ENCODE measurements at regions of chr6 and their contacts with region 1.

Region 1: DNA sequence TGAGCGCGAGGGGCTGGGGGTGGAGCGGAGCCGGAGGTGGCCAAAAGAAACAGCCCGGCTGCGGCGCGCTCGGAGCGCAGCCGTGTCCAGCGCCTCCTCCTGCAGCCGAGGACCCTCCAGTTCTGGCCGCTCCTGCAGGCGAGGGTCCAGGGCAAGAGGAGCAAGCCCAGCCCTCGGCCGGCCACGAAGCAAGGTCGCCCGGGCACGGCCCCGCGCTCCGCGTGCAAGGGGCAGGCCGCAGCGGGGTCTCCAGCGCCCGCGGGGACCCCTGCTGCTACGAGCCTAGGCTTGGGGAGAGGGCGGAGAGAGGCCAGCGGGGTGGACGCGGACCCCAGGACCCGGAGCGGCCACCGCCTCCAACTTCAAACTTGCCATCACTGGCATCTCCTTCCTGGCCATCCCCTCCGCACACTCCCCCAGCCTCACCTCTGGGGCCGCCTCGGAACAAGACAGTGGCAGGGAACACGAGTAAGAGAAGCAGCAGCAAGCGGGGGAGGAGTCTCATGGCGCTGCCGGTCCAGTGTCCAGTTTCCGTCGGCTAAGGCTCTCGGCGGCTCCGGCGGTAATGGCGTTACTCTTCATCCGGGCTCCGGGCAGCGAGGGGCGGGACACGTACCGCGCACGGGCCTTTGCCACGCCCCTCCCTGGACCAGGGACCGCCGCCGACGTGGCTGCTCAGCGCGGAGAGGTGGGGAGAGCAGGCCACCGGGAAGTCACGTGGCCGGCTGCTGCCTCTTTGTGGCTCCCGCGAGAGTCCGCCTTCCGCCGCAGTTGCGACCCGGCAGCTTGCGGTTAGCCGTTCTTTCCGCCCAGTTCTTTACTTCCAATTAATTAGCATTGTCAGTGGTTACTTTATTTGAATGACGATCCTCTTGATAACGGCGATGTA is at the start of gene SSR1:
- DNase-seq: peak; percentile 96
- H3K4me3 Mint-ChIP-seq: peak within 1 kb of the TSS; percentile 92
- H3K27ac Mint-ChIP-seq: peak within 1 kb of the TSS; percentile 94
- H3K4me1 Mint-ChIP-seq: peaks cover 40% of the 10 kb centered on the region
- H3K27me3 Mint-ChIP-seq: no peaks in the 10 kb centered on the region
- total RNA-seq, gene SSR1: 116 to 121 TPM

Region 2: DNA sequence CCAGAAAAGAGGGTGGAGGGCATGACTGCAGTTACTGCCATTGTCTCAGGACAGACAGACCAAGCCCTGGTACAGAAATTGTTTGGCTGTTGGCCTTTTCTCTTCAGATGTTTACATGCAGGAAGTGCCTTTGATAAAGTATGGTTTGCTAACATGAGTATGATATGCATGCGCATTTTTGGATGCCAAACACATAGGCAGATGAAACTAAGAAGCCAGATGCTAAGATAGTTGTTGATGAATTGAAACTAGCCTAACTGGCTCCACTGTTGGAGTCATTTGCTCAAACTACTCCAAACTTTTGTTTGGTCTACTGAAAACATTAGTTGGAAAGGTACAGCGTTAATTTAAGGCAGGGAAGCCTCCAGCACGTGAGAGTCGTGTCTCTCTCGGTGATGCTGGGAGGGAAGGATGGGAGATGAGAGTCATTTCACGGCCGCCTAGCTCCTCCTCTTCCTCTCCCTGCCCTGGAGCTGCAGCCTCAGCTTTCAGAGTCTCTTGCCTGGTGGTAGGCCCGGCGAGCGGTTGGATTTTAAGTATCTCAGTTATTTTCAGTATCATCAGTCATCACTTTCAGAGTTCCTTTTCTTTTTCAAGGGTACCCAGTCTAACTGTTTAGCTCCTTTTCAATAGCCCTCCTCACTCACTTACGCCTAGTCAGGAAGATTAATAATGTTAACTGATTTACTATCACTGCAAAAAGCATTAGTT is 175.4 kb before region 1 on chr6:
- CTCF ChIA-PET with region 1: no interaction called
- intact Hi-C with region 1: loop called (anchors 5 kb)
- DNase-seq: peak; percentile 84
- H3K4me3 Mint-ChIP-seq: peak overlapping the region; percentile 79
- H3K27ac Mint-ChIP-seq: peak overlapping the region; percentile 98
- H3K4me1 Mint-ChIP-seq: peaks cover 80% of the 10 kb centered on the region
- H3K27me3 Mint-ChIP-seq: no peaks in the 10 kb centered on the region

Region 3: DNA sequence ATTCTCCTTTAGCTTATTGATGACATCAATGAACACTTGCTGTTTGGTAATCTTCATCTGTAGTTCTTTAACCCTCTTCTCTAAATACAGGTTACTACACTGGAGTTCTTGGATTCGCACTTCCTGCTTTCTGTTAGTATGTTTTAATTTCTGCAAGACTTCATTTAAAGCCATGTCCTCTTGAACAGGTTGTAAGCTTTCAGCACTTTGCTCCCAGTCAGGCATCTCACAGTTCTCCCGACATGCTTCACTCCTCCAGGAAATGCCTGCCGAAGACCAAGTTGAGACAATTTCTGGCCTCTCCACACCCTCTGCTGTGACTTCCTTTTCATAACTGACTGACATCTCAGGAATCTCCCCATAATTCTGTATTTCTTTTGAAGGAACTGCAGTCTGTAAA is 60.9 kb after region 1 on chr6:
- CTCF ChIA-PET with region 1: no interaction called
- intact Hi-C with region 1: no loop called
- DNase-seq: no peak
- H3K4me3 Mint-ChIP-seq: no peak overlapping the region
- H3K27ac Mint-ChIP-seq: no peak overlapping the region
- H3K4me1 Mint-ChIP-seq: peaks cover 5% of the 10 kb centered on the region
- H3K27me3 Mint-ChIP-seq: peaks cover 2% of the 10 kb centered on the region

Region 4: DNA sequence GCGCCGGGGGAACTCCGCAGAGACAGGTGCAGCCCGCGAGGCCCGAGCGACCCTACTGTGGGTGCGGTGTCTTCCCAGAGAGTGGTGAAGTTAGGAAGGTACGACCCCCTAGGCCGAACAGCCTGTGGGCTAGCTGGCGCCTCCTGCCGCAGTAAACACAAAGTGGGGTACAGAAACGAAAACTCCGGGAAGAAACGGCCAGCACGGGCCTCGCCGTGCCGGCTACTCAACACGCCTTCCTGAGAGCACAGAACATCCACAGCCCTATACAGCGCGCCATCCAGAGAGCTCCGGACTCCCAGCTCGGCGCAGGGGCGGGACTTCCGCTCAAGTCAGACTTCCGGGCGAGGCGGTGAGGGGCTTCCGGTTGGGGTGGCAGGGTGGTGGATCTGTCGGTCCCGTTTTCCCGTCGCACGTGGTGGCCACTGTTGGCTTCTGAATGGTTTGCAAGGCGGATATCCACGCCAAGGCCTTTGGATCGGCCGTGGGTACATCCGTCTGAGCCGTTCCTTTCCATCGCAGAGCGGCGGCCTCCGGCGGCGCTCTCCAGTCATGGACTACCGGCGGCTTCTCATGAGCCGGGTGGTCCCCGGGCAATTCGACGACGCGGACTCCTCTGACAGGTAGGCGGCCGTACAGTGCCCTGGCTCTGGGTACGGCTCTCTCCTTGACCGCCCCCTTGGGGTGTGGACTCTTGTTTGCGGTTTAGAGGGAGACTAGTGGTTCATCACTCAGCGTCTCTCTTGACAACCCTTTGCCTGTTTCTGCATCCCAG is 76.8 kb after region 1 on chr6 and contains the starts of genes CAGE1 and RIOK1:
- CTCF ChIA-PET with region 1: interaction called, 4 read pairs
- intact Hi-C with region 1: loop called (anchors 1 kb)
- DNase-seq: peak; percentile 97
- H3K4me3 Mint-ChIP-seq: peak within 1 kb of the TSS; percentile 94
- H3K27ac Mint-ChIP-seq: peak within 1 kb of the TSS; percentile 97
- H3K4me1 Mint-ChIP-seq: peaks cover 40% of the 10 kb centered on the region
- H3K27me3 Mint-ChIP-seq: no peaks in the 10 kb centered on the region
- total RNA-seq, gene CAGE1: 0.25 to 0.26 TPM
- total RNA-seq, gene RIOK1: 33.8 to 38.5 TPM

Region 5: GRCh38 chr6:7910654-7911344 is 597.9 kb after region 1 on chr6 and contains the start of gene TXNDC5:
- CTCF ChIA-PET with region 1: no interaction called
- intact Hi-C with region 1: loop called (anchors 5 kb)
- DNase-seq: peak; percentile 71
- H3K4me3 Mint-ChIP-seq: peak within 1 kb of the TSS; percentile 81
- H3K27ac Mint-ChIP-seq: peak within 1 kb of the TSS; percentile 38
- H3K4me1 Mint-ChIP-seq: peaks cover 14% of the 10 kb centered on the region
- H3K27me3 Mint-ChIP-seq: no peaks in the 10 kb centered on the region
- total RNA-seq, gene TXNDC5: 60.7 to 62.2 TPM

Region 6: GRCh38 chr6:8435160-8435852 is 1122.4 kb after region 1 on chr6 and contains the start of gene SLC35B3:
- CTCF ChIA-PET with region 1: no interaction called
- intact Hi-C with region 1: loop called (anchors 10 kb)
- DNase-seq: peak; percentile 97
- H3K4me3 Mint-ChIP-seq: peak within 1 kb of the TSS; percentile 89
- H3K27ac Mint-ChIP-seq: peak within 1 kb of the TSS; percentile 94
- H3K4me1 Mint-ChIP-seq: peaks cover 32% of the 10 kb centered on the region
- H3K27me3 Mint-ChIP-seq: no peaks in the 10 kb centered on the region
- total RNA-seq, gene SLC35B3: 7.7 to 8.0 TPM

Measured in activated naive CD4-positive, alpha-beta T cell treated with anti-CD3 and anti-CD28 coated beads for 36 hours (primary cell).